Thyroid gland (tissue), 4 donors: ENCODE measurements at regions of chr11 and their contacts with region 1.

Region 1: GRCh38 chr11:65652511-65653231 is 10.0 kb downstream of the RELA start:
- DNase-seq: peak; percentile 91 to 92
- H3K4me3 ChIP-seq: peak overlapping the region in 2 of 3 donors; percentile 28 to 44
- H3K27ac ChIP-seq: peak overlapping the region; percentile 84 to 97 (median 91)
- H3K4me1 ChIP-seq: peaks cover 25 to 38% of the 10 kb centered on the region in 2 donors
- H3K27me3 ChIP-seq: no peaks in the 10 kb centered on the region
- CTCF ChIP-seq: peak in 1 of 6 experiments; percentile 25
- POLR2A ChIP-seq: peak in 1 of 2 donors; percentile 69

Region 2: GRCh38 chr11:65615229-65615941 is 37.3 kb before region 1 on chr11 and contains the start of gene PCNX3:
- intact Hi-C with region 1: loop called (anchors 5 kb)
- DNase-seq: peak; percentile 100
- H3K4me3 ChIP-seq: peak within 1 kb of the TSS; percentile 68 to 95 (median 75)
- H3K27ac ChIP-seq: peak within 1 kb of the TSS; percentile 90 to 94 (median 91)
- H3K4me1 ChIP-seq: peaks cover 30 to 40% of the 10 kb centered on the region in 2 donors
- H3K27me3 ChIP-seq: no peaks in the 10 kb centered on the region
- CTCF ChIP-seq: peak in 1 of 6 experiments; percentile 37
- POLR2A ChIP-seq: peak in 1 of 2 donors; percentile 54
- total RNA-seq, gene PCNX3: 18.9 to 54.2 (median 47.0) TPM